ENCODE measurements at regions of chr17 and their contacts with region 1.

Region 1: GRCh38 chr17:56319517-56319916 is 166.2 kb downstream of the ANKFN1 start:
- DNase-seq: peak; percentile 58
- H3K4me3 ChIP-seq: no peak overlapping the region
- H3K27ac ChIP-seq: no peak overlapping the region
- H3K4me1 ChIP-seq: no peaks in the 10 kb centered on the region
- H3K27me3 ChIP-seq: no peaks in the 10 kb centered on the region
- CTCF ChIP-seq: peak; percentile 48 to 76

Region 2: GRCh38 chr17:55845385-55845784 is 474.1 kb before region 1 on chr17:
- CTCF ChIA-PET with region 1: no interaction called
- dilution Hi-C with region 1: no loop called
- in situ Hi-C with region 1: loop called in 1 of 2 experiments (anchors 25 kb)
- intact Hi-C with region 1: loop called (anchors 2 kb)
- DNase-seq: peak; percentile 3
- H3K4me3 ChIP-seq: no peak overlapping the region
- H3K27ac ChIP-seq: no peak overlapping the region
- H3K4me1 ChIP-seq: no peaks in the 10 kb centered on the region
- H3K27me3 ChIP-seq: no peaks in the 10 kb centered on the region
- CTCF ChIP-seq: peak; percentile 57 to 73

Region 3: GRCh38 chr17:55996825-55997224 is 322.7 kb before region 1 on chr17:
- CTCF ChIA-PET with region 1: no interaction called
- dilution Hi-C with region 1: no loop called
- in situ Hi-C with region 1: no loop called
- intact Hi-C with region 1: loop called (anchors 1 kb)
- DNase-seq: no peak
- H3K4me3 ChIP-seq: no peak overlapping the region
- H3K27ac ChIP-seq: no peak overlapping the region
- H3K4me1 ChIP-seq: no peaks in the 10 kb centered on the region
- H3K27me3 ChIP-seq: no peaks in the 10 kb centered on the region
- CTCF ChIP-seq: peak in 1 of 2 donors; percentile 23

Region 4: DNA sequence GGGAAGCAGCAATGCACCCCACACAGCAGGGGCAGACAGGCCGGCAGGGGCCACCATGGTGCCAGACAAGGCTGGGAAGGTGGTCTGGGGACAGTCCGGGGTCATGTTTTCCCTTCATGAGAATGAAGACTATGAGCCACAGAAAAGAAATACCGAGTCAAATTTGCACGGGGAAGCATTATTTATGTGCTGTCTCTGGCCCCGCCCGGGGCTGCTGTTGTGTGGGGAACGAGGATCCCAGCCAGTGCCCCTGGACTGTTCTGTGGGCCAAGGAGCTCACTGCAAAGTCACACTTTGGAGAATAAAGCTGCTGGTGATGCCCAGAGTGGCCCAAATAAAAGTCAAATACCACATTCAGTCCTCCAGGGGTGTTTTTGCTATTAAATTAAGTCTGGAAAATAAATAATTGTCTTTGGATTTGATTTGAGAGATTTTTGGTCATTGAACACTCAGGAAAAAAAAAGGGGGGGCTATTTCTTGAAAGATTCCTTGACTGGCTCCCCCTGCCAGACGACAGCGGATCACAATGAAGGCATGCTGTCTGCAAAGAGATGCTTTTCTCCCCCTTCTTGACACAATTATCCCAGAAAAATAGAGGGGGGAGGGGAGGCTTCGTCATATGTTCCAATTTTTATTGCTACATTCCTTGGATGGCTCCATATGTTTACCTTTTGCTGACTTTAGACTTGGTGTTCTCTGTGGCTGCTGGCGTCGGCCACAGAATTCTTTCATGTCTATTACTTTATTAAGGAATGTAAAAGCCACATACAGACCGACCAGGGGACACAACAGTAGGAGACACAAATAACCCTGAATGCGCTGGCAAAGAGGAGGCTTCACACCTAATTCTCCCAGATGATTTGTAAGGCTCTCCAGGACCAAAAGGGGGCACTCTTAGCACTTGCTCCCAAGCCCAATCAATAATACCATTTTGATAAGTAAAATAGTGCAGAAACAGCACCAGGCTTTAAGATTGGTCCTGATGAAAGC is 193.4 kb before region 1 on chr17:
- CTCF ChIA-PET with region 1: no interaction called
- dilution Hi-C with region 1: no loop called
- in situ Hi-C with region 1: loop called in 1 of 2 experiments (anchors 10 kb)
- intact Hi-C with region 1: loop called (anchors 1 kb)
- DNase-seq: peak; percentile 17
- H3K4me3 ChIP-seq: no peak overlapping the region
- H3K27ac ChIP-seq: no peak overlapping the region
- H3K4me1 ChIP-seq: no peaks in the 10 kb centered on the region
- H3K27me3 ChIP-seq: no peaks in the 10 kb centered on the region
- CTCF ChIP-seq: peak; percentile 60 to 77

Region 5: DNA sequence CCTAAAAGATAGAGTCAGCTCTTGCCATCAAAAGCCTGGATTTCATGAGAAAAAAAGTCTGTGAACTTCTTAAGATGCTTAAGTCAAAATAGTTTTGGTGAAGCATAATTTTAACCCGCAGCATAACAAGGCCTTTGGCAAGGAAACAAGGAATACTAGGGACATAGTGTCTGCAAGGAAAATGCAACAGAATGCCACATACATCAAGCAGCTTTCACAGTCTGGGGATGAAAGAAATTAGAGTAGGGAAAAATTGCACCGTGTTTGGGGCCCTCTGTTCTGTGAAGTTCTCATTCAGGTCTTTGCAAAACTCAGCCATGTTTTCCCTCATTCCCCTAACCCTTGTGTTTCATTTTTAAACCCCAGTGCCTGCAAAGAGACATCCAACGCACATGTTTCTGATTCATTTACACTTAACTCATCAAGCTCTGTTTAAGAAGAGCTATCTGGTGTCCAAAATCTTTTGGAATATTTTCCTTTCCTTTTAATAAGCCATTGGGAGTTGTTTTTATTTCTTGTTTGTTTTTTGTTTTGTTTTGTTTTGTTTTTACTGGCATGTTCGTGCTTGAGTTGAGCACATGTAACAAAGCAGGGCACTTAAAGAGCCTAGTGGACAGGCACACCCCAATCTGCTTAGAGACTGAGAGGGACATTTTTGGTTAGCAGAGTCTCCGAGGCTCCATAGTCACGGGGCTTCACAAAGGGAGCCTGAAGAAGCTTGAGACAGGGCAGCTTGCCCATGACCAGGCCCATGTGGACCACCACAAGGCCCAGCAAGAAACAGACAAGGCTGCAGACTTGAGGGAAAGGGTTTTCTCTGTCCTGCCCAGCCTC is 49.7 kb before region 1 on chr17:
- CTCF ChIA-PET with region 1: no interaction called
- dilution Hi-C with region 1: no loop called
- in situ Hi-C with region 1: no loop called
- intact Hi-C with region 1: no loop called
- DNase-seq: no peak
- H3K4me3 ChIP-seq: no peak overlapping the region
- H3K27ac ChIP-seq: no peak overlapping the region
- H3K4me1 ChIP-seq: no peaks in the 10 kb centered on the region
- H3K27me3 ChIP-seq: no peaks in the 10 kb centered on the region
- CTCF ChIP-seq: no peak

Region 6: DNA sequence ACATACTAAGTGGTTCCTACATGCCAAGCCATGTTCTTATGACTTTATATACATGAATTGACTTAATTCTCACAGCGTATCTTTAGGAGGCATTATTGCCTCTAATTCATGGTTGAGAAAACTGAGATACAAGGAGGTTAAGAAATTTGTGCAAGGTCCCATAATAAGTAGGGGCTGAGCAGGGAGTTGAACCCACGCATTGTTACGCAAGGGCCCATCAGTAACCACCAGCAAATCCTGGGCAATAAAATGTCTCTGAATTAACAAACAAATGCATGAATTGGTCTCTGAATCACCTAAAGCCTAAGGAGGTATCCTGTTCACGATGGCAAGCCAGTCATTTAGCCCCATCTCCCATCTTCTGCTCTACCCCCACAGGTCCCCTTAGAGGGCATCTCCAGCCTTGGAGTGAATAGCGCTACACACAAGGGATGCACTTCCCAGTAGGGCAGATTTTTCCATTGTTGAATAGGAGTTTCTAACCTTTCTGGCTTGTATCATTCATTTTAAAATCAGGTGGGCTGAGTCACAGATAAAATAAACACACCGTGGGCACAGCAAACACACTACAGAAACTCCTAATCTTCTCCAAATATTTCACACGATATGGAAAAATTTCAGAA is 72.6 kb after region 1 on chr17:
- CTCF ChIA-PET with region 1: no interaction called
- dilution Hi-C with region 1: no loop called
- in situ Hi-C with region 1: no loop called
- intact Hi-C with region 1: no loop called
- DNase-seq: no peak
- H3K4me3 ChIP-seq: no peak overlapping the region
- H3K27ac ChIP-seq: no peak overlapping the region
- H3K4me1 ChIP-seq: no peaks in the 10 kb centered on the region
- H3K27me3 ChIP-seq: no peaks in the 10 kb centered on the region
- CTCF ChIP-seq: no peak

Region 7: GRCh38 chr17:56478836-56479447 is 159.4 kb after region 1 on chr17:
- CTCF ChIA-PET with region 1: no interaction called
- dilution Hi-C with region 1: no loop called
- in situ Hi-C with region 1: no loop called
- intact Hi-C with region 1: loop called (anchors 2 kb)
- DNase-seq: peak; percentile 32
- H3K4me3 ChIP-seq: no peak overlapping the region
- H3K27ac ChIP-seq: no peak overlapping the region
- H3K4me1 ChIP-seq: no peaks in the 10 kb centered on the region
- H3K27me3 ChIP-seq: peaks cover 1% of the 10 kb centered on the region
- CTCF ChIP-seq: peak; percentile 55 to 59

Region 8: GRCh38 chr17:56779898-56780733 is 460.6 kb after region 1 on chr17:
- CTCF ChIA-PET with region 1: no interaction called
- dilution Hi-C with region 1: no loop called
- in situ Hi-C with region 1: no loop called
- intact Hi-C with region 1: loop called (anchors 10 kb)
- DNase-seq: peak; percentile 78
- H3K4me3 ChIP-seq: peak overlapping the region in 2 of 3 experiments; percentile 32 to 35
- H3K27ac ChIP-seq: no peak overlapping the region
- H3K4me1 ChIP-seq: peaks cover 20% of the 10 kb centered on the region
- H3K27me3 ChIP-seq: no peaks in the 10 kb centered on the region
- CTCF ChIP-seq: peak; percentile 78 to 96